ENCODE measurements at regions of chr10 and their contacts with region 1.

Region 1: GRCh38 chr10:31031558-31032257 is at the start of gene ZNF438:
- H3K4me3 Mint-ChIP-seq: peak within 1 kb of the TSS; percentile 90
- H3K27ac Mint-ChIP-seq: peak within 1 kb of the TSS; percentile 93
- H3K4me1 Mint-ChIP-seq: peaks cover 48% of the 10 kb centered on the region
- H3K27me3 Mint-ChIP-seq: no peaks in the 10 kb centered on the region

Region 2: DNA sequence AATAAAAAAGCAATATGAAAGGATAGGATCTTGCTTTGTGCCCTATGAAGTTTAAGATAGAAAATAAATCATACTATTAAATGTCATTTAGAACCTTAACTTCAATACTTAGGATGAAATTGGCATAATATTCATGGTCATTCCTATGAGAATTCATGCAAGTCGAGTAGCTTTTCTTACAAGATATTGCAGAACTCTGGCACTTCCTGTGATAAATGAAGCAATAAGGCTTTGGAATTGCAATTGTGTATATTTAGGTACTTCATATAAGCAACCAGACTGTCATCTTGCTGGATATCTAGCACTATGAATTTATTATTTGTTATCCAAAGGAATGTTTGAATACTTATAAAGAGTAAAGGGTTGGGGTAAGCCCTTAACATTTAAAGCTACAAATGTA is 116.6 kb before region 1 on chr10:
- intact Hi-C with region 1: no loop called
- H3K4me3 Mint-ChIP-seq: no peak overlapping the region
- H3K27ac Mint-ChIP-seq: no peak overlapping the region
- H3K4me1 Mint-ChIP-seq: peaks cover 11% of the 10 kb centered on the region
- H3K27me3 Mint-ChIP-seq: no peaks in the 10 kb centered on the region

Region 3: GRCh38 chr10:30986053-30986555 is 45.6 kb before region 1 on chr10:
- intact Hi-C with region 1: loop called (anchors 5 kb)
- H3K4me3 Mint-ChIP-seq: no peak overlapping the region
- H3K27ac Mint-ChIP-seq: no peak overlapping the region
- H3K4me1 Mint-ChIP-seq: peaks cover 13% of the 10 kb centered on the region
- H3K27me3 Mint-ChIP-seq: no peaks in the 10 kb centered on the region

Region 4: GRCh38 chr10:30999070-30999712 is 32.5 kb before region 1 on chr10:
- intact Hi-C with region 1: loop called (anchors 1 kb)
- H3K4me3 Mint-ChIP-seq: peak overlapping the region; percentile 85
- H3K27ac Mint-ChIP-seq: peak overlapping the region; percentile 96
- H3K4me1 Mint-ChIP-seq: peaks cover 62% of the 10 kb centered on the region
- H3K27me3 Mint-ChIP-seq: no peaks in the 10 kb centered on the region

Region 5: GRCh38 chr10:31011017-31011659 is 20.6 kb before region 1 on chr10:
- intact Hi-C with region 1: no loop called
- H3K4me3 Mint-ChIP-seq: no peak overlapping the region
- H3K27ac Mint-ChIP-seq: peak overlapping the region; percentile 18
- H3K4me1 Mint-ChIP-seq: peaks cover 38% of the 10 kb centered on the region
- H3K27me3 Mint-ChIP-seq: no peaks in the 10 kb centered on the region